ENCODE measurements at regions of chr12 and their contacts with region 1.

Region 1: GRCh38 chr12:7142056-7142644 is 12.0 kb downstream of the CLSTN3 start:
- DNase-seq: peak in 7 of 10 donors; percentile 35 to 92 (median 50)

Region 2: DNA sequence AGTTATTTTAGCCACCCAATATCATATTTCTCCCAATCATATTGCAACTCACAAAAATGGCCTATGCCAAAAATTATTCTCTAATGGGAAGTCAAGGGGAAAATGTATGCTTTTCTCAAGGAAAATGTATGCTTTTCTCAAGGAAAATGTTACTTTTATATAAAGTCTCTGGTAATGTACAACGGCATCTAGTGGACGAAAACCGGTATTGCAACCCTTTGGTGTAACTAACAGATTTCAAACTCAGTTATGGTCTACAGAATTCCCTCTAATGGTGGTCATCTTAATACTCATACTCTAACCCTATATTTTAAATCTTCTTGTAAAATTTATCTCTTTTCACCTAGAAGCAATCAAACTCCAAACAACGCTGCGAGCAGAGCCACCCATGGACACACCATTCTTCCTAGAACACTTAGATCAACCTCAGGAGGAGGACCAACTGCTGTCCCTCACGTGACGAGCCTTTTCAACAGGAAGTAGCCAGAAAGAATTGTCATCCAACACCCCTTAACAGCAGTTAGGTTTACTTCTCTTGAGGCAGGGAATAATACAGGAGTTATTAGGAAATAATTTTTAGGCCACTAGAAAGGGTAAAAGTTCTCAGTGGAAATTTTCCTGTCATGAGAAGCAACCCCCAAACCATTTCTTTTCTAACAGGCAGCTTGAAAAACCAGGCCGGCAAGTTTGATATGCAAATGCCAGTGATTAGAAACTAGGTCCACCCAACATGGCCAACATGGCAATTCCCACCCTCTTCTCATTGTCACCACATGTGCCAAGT is 503.4 kb after region 1 on chr12:
- intact Hi-C with region 1: loop called (anchors 10 kb)
- DNase-seq: peak in 2 of 10 donors; percentile 18 to 41